Mammary epithelial cell (primary cell): ENCODE measurements at regions of chr6 and their contacts with region 1.

Region 1: GRCh38 chr6:31546962-31547726 is at the start of gene NFKBIL1:
- DNase-seq: peak; percentile 94
- H3K4me3 ChIP-seq: peak within 1 kb of the TSS; percentile 49 to 53 (median 53)
- H3K27ac ChIP-seq: peak within 1 kb of the TSS; percentile 75
- H3K4me1 ChIP-seq: peaks cover 22% of the 10 kb centered on the region
- H3K27me3 ChIP-seq: no peaks in the 10 kb centered on the region
- CTCF ChIP-seq: no peak
- total RNA-seq, gene NFKBIL1: 22.0 to 24.2 TPM

Region 2: GRCh38 chr6:31493875-31494694 is 53.1 kb before region 1 on chr6:
- CTCF ChIA-PET with region 1: no interaction called
- dilution Hi-C with region 1: no loop called
- in situ Hi-C with region 1: loop called in 1 of 2 experiments (anchors 5 kb)
- intact Hi-C with region 1: loop called (anchors 1 kb)
- DNase-seq: peak; percentile 63
- H3K4me3 ChIP-seq: peak overlapping the region; percentile 65 to 73 (median 71)
- H3K27ac ChIP-seq: peak overlapping the region; percentile 79
- H3K4me1 ChIP-seq: peaks cover 23% of the 10 kb centered on the region
- H3K27me3 ChIP-seq: no peaks in the 10 kb centered on the region
- CTCF ChIP-seq: peak; percentile 77 to 95

Region 3: DNA sequence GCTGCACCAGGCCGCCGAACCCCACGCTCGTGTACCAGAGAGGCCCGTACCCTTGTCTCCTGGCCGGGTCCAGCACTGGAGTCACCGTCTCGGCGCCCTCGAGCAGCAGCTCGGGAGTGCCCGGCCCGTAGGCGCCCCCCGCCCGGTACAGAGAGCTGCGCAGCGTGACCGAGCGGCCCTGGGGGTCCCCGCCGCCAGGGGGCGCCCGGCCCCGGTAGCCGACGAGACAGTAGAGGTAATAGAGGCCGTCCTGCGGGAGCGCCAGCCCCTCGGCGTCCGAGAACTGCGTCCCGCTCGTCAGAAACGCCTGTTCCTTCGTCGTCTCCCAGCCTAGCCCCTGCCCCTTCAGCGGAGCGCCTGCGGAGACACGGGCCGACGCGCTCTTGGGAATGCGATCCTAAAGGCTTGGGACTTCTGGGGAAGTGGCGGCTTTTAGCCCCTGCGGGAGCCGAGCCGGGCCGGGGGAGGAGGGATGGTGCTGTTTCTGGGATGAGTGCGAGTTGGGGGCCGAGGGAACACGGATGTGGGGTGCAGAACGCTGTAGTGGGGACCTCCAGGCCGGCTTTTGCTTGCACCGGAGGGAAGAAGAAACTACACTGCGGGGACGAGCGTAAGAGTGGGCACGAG is 33.8 kb after region 1 on chr6:
- CTCF ChIA-PET with region 1: interaction called, 3 read pairs
- dilution Hi-C with region 1: loop called (anchors 5 kb)
- in situ Hi-C with region 1: no loop called
- intact Hi-C with region 1: loop called (anchors 1 kb)
- DNase-seq: peak; percentile 66
- H3K4me3 ChIP-seq: peak overlapping the region; percentile 72 to 92 (median 85)
- H3K27ac ChIP-seq: peak overlapping the region; percentile 61
- H3K4me1 ChIP-seq: peaks cover 21% of the 10 kb centered on the region
- H3K27me3 ChIP-seq: no peaks in the 10 kb centered on the region
- CTCF ChIP-seq: peak; percentile 75 to 96

Region 4: GRCh38 chr6:31619805-31620585 is 72.9 kb after region 1 on chr6:
- CTCF ChIA-PET with region 1: no interaction called
- dilution Hi-C with region 1: loop called (anchors 5 kb)
- in situ Hi-C with region 1: no loop called
- intact Hi-C with region 1: loop called (anchors 1 kb)
- DNase-seq: peak; percentile 99
- H3K4me3 ChIP-seq: peak overlapping the region; percentile 55 to 88 (median 77)
- H3K27ac ChIP-seq: peak overlapping the region; percentile 96
- H3K4me1 ChIP-seq: peaks cover 16% of the 10 kb centered on the region
- H3K27me3 ChIP-seq: no peaks in the 10 kb centered on the region
- CTCF ChIP-seq: no peak

Region 5: GRCh38 chr6:31769684-31770371 is 222.7 kb after region 1 on chr6:
- CTCF ChIA-PET with region 1: no interaction called
- dilution Hi-C with region 1: no loop called
- in situ Hi-C with region 1: no loop called
- intact Hi-C with region 1: loop called (anchors 1 kb)
- DNase-seq: peak; percentile 70
- H3K4me3 ChIP-seq: no peak overlapping the region
- H3K27ac ChIP-seq: no peak overlapping the region
- H3K4me1 ChIP-seq: peaks cover 7% of the 10 kb centered on the region
- H3K27me3 ChIP-seq: no peaks in the 10 kb centered on the region
- CTCF ChIP-seq: peak; percentile 88 to 95